Mucosa of descending colon (tissue), 3 donors: ENCODE measurements at regions of chr5 and their contacts with region 1.

Region 1: GRCh38 chr5:130885027-130885426 is 280.0 kb downstream of the HINT1 start:
- DNase-seq: peak in 1 of 3 donors; percentile 79
- ATAC-seq: peak; percentile 93
- H3K4me3 ChIP-seq: no peak overlapping the region
- H3K4me1 ChIP-seq: peaks cover 16% of the 10 kb centered on the region
- CTCF ChIP-seq: no peak

Region 2: DNA sequence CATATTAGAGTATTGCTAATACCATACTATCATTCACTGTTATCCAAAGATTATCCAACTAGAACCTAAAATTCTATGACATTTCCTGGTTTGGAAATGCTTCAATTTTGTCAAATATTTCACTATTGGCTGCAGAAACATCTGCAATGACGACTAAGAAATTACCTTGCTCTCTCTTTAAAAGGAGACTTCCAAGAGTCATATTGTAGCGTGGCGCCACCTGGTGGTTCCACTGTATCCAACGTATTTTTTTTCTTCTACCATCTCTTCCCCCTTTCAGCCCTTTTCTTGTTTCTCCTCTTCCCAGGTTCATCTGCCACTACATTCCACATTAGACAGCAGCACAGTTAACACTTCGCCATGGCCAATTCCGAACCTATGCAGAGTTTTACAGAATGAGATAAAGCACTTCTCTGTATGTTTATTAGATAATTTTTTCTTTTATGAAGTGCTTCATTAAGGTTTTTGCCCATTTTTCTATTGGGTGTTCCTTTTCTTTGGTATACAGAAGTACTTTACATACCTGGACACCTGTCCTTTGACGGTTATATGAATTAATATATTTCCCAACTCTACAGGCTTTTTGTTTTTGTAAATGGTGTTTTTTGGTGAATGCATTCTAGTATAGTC is 532.3 kb after region 1 on chr5:
- intact Hi-C with region 1: loop called in 1 of 2 experiments (anchors 10 kb)
- DNase-seq: peak; percentile 68 to 89 (median 84)
- ATAC-seq: peak; percentile 90
- H3K4me3 ChIP-seq: no peak overlapping the region
- H3K4me1 ChIP-seq: no peaks in the 10 kb centered on the region
- CTCF ChIP-seq: peak; percentile 43